PC-9 (cell line): ENCODE measurements at regions of chr14 and their contacts with region 1.

Region 1: DNA sequence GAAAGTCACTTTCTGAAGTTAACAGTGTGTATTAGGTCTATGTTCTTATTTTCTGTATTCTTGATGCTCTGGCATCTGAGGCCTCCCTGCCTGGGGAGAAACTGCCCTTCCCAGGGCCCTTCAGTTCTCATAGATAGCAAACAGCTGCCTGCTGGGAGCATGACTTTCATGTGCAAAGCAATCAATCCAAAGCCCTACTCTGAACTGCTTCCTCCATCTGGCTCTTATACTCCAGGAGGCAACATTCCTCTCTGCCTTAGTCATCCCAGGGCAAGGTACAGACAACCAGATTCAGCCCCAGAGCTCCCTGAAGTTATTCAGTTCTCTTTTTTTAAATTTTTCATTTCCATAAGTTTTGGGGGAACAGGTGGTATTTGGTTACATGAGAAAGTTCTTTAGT is 41.7 kb upstream of the RIN3 start:
- DNase-seq: peak; percentile 53 to 90
- H3K4me3 ChIP-seq: no peak overlapping the region
- H3K27ac ChIP-seq: peak overlapping the region; percentile 55
- H3K4me1 ChIP-seq: peaks cover 44% of the 10 kb centered on the region
- H3K27me3 ChIP-seq: no peaks in the 10 kb centered on the region
- CTCF ChIP-seq: no peak

Region 2: DNA sequence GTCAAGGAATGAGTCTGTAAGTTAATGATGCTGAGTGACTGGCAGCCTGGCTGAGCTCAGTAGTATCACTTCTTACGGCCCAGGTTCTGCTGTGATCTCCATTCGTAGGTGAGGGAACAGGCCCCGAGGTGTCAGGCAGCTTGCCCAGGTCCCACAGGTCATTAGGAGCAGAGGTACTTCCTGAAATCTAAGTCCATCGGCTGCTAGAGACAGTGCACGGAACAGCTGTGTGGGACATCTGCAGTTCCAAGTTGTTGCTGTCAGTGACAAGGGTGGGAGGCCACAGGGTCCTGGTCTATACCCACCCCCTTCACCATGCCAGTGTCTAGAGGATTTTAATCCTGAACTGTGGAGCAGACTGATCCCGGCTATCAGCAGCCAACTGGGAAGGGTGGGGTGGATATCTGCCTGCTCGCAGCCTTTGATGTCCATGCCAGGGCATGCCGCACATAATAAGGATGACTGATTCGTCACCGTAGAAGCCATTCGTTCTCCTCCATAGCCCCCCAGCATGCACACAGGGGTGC is 40.7 kb before region 1 on chr14:
- CTCF ChIA-PET with region 1: no interaction called
- POLR2A ChIA-PET with region 1: no interaction called
- intact Hi-C with region 1: no loop called
- DNase-seq: no peak
- H3K4me3 ChIP-seq: no peak overlapping the region
- H3K27ac ChIP-seq: no peak overlapping the region
- H3K4me1 ChIP-seq: peaks cover 9% of the 10 kb centered on the region
- H3K27me3 ChIP-seq: no peaks in the 10 kb centered on the region
- CTCF ChIP-seq: no peak

Region 3: DNA sequence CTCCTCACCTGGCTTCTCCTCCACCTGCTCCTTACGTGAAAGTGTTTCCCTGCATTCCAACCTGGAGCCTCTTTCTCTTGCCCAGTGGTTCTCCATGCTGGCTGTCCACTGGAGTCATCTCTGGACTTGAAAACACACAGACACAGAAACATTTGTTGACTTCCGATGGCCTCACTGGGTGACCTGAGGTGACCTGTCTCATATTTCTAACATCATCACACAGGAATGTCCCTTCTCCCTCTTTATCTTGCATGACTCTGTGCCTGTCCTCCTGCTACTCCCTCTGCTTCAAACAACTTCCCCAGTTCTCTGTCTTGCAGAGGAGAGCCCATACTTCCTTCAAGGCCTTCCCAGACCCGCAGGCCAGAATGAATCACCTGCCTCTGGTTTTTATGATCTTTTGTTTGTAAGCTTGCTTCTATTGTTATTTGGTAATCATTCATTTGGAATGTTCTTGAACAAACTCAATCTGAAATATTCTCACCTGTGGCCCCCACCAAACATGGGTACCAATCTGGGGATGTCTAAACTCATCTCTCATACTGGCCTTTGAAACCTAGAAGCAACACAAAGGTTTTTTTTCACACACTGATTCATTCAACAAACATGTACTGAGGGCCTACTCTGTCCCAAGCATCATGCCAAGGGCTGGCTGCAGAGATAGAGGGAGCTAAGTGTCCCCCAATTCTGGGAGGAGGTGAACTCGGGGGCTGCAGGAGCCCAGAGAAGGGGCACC is 32.0 kb after region 1 on chr14:
- CTCF ChIA-PET with region 1: no interaction called
- POLR2A ChIA-PET with region 1: no interaction called
- intact Hi-C with region 1: loop called (anchors 2 kb)
- DNase-seq: peak; percentile 70 to 99
- H3K4me3 ChIP-seq: no peak overlapping the region
- H3K27ac ChIP-seq: peak overlapping the region; percentile 85
- H3K4me1 ChIP-seq: peaks cover 69% of the 10 kb centered on the region
- H3K27me3 ChIP-seq: no peaks in the 10 kb centered on the region
- CTCF ChIP-seq: no peak

Region 4: GRCh38 chr14:92511452-92512238 is 39.7 kb after region 1 on chr14:
- CTCF ChIA-PET with region 1: no interaction called
- POLR2A ChIA-PET with region 1: no interaction called
- intact Hi-C with region 1: loop called (anchors 2 kb)
- DNase-seq: peak; percentile 50 to 88
- H3K4me3 ChIP-seq: peak overlapping the region; percentile 32; the same call in 1 of the 2 replicates
- H3K27ac ChIP-seq: peak overlapping the region; percentile 86
- H3K4me1 ChIP-seq: peaks cover 61% of the 10 kb centered on the region
- H3K27me3 ChIP-seq: no peaks in the 10 kb centered on the region
- CTCF ChIP-seq: no peak

Region 5: GRCh38 chr14:92524602-92525185 is 52.8 kb after region 1 on chr14:
- CTCF ChIA-PET with region 1: no interaction called
- POLR2A ChIA-PET with region 1: no interaction called
- intact Hi-C with region 1: no loop called
- DNase-seq: no peak
- H3K4me3 ChIP-seq: no peak overlapping the region
- H3K27ac ChIP-seq: no peak overlapping the region
- H3K4me1 ChIP-seq: no peaks in the 10 kb centered on the region
- H3K27me3 ChIP-seq: no peaks in the 10 kb centered on the region
- CTCF ChIP-seq: no peak

Region 6: DNA sequence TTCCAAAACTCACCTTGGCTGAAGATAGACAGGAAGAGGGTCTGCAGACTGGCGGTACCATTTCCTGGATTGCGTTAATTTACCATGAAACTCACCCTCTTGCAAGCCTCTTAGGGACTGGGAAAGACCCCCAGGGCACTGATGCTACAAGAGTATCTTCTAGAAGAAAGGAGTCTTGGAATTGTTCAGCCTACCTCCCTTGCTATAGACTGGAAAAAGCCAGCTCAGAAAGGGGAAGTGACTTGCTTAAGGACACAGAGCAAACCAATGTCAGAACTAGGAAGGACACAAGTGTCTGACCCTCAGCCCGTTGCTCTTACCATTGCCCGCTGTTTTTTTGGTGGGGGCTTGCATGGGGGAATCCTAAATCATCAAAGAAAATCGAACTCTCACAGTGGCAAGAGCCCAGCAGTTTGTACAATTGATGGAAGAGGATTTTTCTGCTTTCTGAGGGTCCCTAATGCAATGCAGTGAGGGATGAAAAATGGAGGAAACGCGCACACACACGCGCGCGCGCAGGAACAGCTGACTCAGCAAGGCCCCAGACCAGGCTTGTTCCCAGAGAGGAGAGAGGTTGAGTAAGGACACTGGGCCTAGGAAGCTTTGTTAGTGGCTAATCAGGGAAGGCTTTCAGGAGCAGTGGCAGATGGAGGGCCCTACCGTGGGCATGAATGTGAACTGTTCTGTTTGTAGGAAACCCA is 92.5 kb after region 1 on chr14:
- CTCF ChIA-PET with region 1: no interaction called
- POLR2A ChIA-PET with region 1: no interaction called
- intact Hi-C with region 1: loop called (anchors 1 kb)
- DNase-seq: no peak
- H3K4me3 ChIP-seq: no peak overlapping the region
- H3K27ac ChIP-seq: peak overlapping the region; percentile 87
- H3K4me1 ChIP-seq: peaks cover 52% of the 10 kb centered on the region
- H3K27me3 ChIP-seq: no peaks in the 10 kb centered on the region
- CTCF ChIP-seq: no peak